ENCODE measurements at regions of chr10 and their contacts with region 1.

Region 1: DNA sequence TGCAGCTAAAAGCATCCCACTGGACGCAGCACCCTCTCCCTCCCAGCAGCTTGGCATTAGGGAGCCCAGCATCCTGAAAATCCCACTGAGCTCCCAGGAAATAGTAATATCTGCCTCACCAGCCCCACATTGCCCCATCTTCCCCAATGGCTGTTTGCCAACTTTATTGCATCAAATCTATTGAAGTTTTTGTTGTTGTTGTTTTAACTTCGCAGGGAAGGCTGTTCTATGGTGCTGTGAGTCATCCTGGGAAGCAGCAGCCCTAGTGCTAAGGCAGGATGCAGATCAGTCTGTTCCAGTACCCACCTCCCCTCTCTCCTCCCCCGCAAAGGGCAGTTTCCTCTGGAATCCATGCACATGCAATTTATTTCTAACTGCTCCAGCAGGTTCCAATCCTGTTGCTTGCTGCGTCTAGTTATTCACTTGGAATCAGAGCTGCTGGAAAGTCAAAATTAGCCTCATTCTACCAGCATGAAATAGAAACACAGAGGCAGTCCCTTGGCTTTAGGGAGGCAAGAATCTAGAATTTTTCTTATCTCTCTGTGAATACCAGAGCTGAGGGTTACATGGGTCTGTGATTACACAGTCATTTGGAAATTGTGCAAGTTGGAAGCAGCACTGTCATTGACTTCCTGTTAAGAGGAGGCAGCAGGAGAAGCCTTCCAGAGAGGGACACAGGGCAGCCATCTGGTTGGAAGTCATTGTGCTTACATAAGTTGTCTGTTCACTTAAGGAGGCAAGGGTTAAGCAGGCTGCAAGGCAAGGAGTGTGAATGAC is 115.9 kb upstream of the CACUL1 start:
- DNase-seq: peak; percentile 91
- H3K4me3 ChIP-seq: peak overlapping the region in 1 of 3 experiments; percentile 17
- H3K27ac ChIP-seq: peak overlapping the region; percentile 75
- H3K4me1 ChIP-seq: peaks cover 45% of the 10 kb centered on the region
- H3K27me3 ChIP-seq: no peaks in the 10 kb centered on the region
- CTCF ChIP-seq: no peak

Region 2: DNA sequence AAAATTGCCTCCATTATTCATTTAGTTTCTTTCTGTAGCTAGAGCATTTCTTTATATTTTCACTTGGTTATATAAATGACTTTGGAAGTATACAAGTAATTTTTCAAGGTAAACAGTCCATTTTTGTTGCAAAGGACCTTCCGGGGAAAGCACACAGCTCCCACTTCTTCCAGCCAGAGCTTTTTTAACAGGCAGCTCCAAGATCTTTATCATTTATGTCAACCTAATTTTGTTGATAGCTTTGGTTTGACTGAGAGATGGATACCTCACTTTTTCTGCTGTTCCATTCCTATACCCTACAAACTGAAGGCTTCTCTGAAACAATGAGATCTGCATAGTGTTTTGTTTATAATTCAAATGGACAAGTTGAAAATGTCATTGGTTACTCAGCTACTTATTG is 774.6 kb before region 1 on chr10:
- CTCF ChIA-PET with region 1: no interaction called
- dilution Hi-C with region 1: no loop called
- in situ Hi-C with region 1: no loop called
- intact Hi-C with region 1: no loop called
- DNase-seq: no peak
- H3K4me3 ChIP-seq: no peak overlapping the region
- H3K27ac ChIP-seq: no peak overlapping the region
- H3K4me1 ChIP-seq: no peaks in the 10 kb centered on the region
- H3K27me3 ChIP-seq: no peaks in the 10 kb centered on the region
- CTCF ChIP-seq: no peak

Region 3: DNA sequence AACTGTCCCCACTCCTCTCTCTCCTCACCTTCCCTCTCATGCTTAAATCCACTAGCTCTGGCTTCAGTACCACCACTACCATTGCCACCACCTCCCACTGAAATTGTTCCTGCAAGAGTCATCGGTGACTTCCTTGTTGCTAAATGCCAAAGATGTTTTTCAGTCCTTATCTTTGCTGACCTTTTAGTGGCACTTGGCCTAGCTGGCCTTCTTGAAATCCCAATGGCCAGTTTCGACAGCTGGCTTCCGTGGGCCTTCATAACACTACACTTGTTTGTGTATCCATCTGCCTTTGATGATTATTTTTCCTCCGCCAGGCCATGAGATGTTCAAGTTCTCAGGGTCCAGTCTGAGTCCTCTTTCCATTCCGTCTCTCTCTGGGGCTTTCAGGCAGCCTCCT is 40.7 kb after region 1 on chr10:
- CTCF ChIA-PET with region 1: no interaction called
- dilution Hi-C with region 1: no loop called
- in situ Hi-C with region 1: no loop called
- intact Hi-C with region 1: no loop called
- DNase-seq: peak; percentile 11
- H3K4me3 ChIP-seq: no peak overlapping the region
- H3K27ac ChIP-seq: no peak overlapping the region
- H3K4me1 ChIP-seq: peaks cover 5% of the 10 kb centered on the region
- H3K27me3 ChIP-seq: no peaks in the 10 kb centered on the region
- CTCF ChIP-seq: no peak

Region 4: GRCh38 chr10:118958984-118959916 is 88.6 kb after region 1 on chr10:
- CTCF ChIA-PET with region 1: no interaction called
- dilution Hi-C with region 1: no loop called
- in situ Hi-C with region 1: no loop called
- intact Hi-C with region 1: no loop called
- DNase-seq: peak; percentile 57
- H3K4me3 ChIP-seq: no peak overlapping the region
- H3K27ac ChIP-seq: no peak overlapping the region
- H3K4me1 ChIP-seq: peaks cover 33% of the 10 kb centered on the region
- H3K27me3 ChIP-seq: no peaks in the 10 kb centered on the region
- CTCF ChIP-seq: no peak

Region 5: DNA sequence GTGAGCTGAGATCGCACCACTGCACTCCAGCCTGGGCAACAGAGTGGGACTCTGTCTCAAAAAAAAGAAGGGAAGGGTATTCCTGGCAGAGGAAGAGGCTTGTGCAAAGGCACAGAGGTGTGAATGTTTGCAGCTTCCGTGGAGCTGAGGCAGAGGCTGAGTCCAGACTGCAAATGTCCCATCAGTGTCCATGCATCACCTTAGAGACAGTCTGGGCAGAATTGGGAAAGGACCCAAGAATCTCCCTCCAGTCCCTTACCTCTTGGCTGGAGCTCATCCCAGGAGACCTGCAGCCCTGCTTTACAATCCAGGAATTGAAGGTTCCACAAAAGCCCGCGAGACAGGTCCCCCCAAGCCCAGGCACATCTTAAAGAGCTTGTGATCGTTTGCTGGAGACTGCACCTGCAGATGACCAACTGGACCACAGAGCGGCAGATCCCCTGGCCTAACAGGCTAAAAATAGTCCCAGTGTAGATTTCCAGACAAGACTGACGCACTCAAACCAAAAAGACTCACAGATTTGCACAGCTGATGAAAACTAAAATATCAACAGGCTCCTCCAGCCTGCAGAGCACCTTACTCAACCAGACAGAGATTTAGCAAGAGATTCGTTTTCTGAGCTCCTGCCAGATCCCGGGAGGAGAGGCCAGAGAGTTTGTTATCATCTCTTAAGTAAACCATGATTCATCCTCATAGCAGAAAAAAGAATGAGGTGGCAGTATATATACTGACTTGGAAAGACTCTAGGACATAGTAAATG is 136.0 kb after region 1 on chr10:
- CTCF ChIA-PET with region 1: no interaction called
- dilution Hi-C with region 1: no loop called
- in situ Hi-C with region 1: no loop called
- intact Hi-C with region 1: loop called (anchors 2 kb)
- DNase-seq: peak; percentile 96
- H3K4me3 ChIP-seq: no peak overlapping the region
- H3K27ac ChIP-seq: no peak overlapping the region
- H3K4me1 ChIP-seq: peaks cover 41% of the 10 kb centered on the region
- H3K27me3 ChIP-seq: no peaks in the 10 kb centered on the region
- CTCF ChIP-seq: no peak

Measured in mammary epithelial cell (primary cell).